ENCODE measurements at regions of chr11 and their contacts with region 1.

Region 1: GRCh38 chr11:111429066-111429506 is 50.0 kb upstream of the POU2AF1 start:
- DNase-seq: peak; percentile 85
- H3K4me3 ChIP-seq: no peak overlapping the region
- H3K27ac ChIP-seq: no peak overlapping the region
- H3K4me1 ChIP-seq: peaks cover 26% of the 10 kb centered on the region
- CTCF ChIP-seq: peak; percentile 100

Region 2: GRCh38 chr11:111320728-111321568 is 108.1 kb before region 1 on chr11:
- CTCF ChIA-PET with region 1: no interaction called
- POLR2A ChIA-PET with region 1: no interaction called
- intact Hi-C with region 1: no loop called
- DNase-seq: no peak
- H3K4me3 ChIP-seq: no peak overlapping the region
- H3K27ac ChIP-seq: no peak overlapping the region
- H3K4me1 ChIP-seq: no peaks in the 10 kb centered on the region
- CTCF ChIP-seq: no peak

Region 3: GRCh38 chr11:111441443-111441842 is 12.4 kb after region 1 on chr11:
- CTCF ChIA-PET with region 1: interaction called, 22 read pairs
- POLR2A ChIA-PET with region 1: interaction called, 39 read pairs
- intact Hi-C with region 1: loop called (anchors 1 kb)
- DNase-seq: no peak
- H3K4me3 ChIP-seq: no peak overlapping the region
- H3K27ac ChIP-seq: no peak overlapping the region
- H3K4me1 ChIP-seq: peaks cover 79% of the 10 kb centered on the region
- CTCF ChIP-seq: no peak

Region 4: GRCh38 chr11:111601979-111602864 is 173.1 kb after region 1 on chr11 and contains the start of gene SIK2:
- CTCF ChIA-PET with region 1: no interaction called
- POLR2A ChIA-PET with region 1: no interaction called
- intact Hi-C with region 1: no loop called
- DNase-seq: peak; percentile 97
- H3K4me3 ChIP-seq: peak within 1 kb of the TSS; percentile 96
- H3K27ac ChIP-seq: peak within 1 kb of the TSS; percentile 72
- H3K4me1 ChIP-seq: peaks cover 30% of the 10 kb centered on the region
- CTCF ChIP-seq: peak; percentile 80
- total RNA-seq, gene SIK2: 8.5 and 9.8 TPM in 2 replicates

Measured in OCI-LY7 (cell line).